HCT116 (cell line): ENCODE measurements at regions of chr11 and their contacts with region 1.

Region 1: GRCh38 chr11:18203723-18204122 is 31.1 kb downstream of the MRGPRX4 start:
- DNase-seq: peak; percentile 8
- ATAC-seq: peak; percentile 99
- H3K4me3 ChIP-seq: no peak overlapping the region
- H3K27ac ChIP-seq: no peak overlapping the region
- H3K4me1 ChIP-seq: no peaks in the 10 kb centered on the region
- H3K27me3 ChIP-seq: no peaks in the 10 kb centered on the region
- CTCF ChIP-seq: peak; percentile 61 to 71 (median 67); a peak in 5 of 6 replicates
- POLR2A ChIP-seq: no peak
- RAD21 ChIP-seq: peak; percentile 68

Region 2: DNA sequence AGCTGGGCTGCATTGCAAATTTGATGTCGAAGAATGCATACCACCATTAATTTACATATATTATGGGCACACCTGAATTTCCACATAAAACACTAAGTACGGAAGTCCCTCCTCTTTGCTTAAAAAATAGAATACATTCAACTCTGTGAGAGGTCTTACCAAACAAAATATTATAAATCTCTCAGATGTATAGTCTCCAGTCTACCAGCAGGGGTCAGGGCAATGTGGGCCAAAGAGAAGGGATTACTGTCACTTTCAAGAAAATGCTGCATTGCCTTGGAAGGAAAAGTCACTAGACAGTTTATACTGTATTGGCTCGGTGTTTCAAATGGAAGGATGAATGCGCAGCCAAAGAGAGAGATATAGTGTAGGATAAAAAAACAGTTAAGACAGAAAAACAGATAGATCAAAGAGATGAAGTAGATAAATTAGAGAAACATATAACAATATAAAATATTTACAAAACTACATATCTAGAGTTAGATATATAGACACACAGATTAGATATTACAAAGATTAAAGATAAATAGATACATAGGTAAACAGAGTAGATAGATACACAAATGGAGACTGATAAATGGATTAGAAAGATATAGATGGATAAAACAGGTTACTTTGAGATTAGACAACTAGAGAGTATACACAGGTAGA is 211.8 kb before region 1 on chr11:
- CTCF ChIA-PET with region 1: interaction called, 3 read pairs
- POLR2A ChIA-PET with region 1: no interaction called
- RAD21 ChIA-PET with region 1: no interaction called
- intact Hi-C with region 1: loop called (anchors 5 kb)
- DNase-seq: peak; percentile 42
- ATAC-seq: peak; percentile 85
- H3K4me3 ChIP-seq: no peak overlapping the region
- H3K27ac ChIP-seq: no peak overlapping the region
- H3K4me1 ChIP-seq: peaks cover 0 to 5% of the 10 kb centered on the region in 2 experiments; a peak in 2 of 4 replicates
- H3K27me3 ChIP-seq: no peaks in the 10 kb centered on the region
- CTCF ChIP-seq: peak; percentile 54 to 89 (median 83); a peak in 5 of 6 replicates
- POLR2A ChIP-seq: no peak
- RAD21 ChIP-seq: peak; percentile 69

Region 3: GRCh38 chr11:18046116-18046777 is 157.5 kb before region 1 on chr11 and contains the start of gene TPH1:
- CTCF ChIA-PET with region 1: no interaction called
- POLR2A ChIA-PET with region 1: no interaction called
- RAD21 ChIA-PET with region 1: no interaction called
- intact Hi-C with region 1: no loop called
- DNase-seq: no peak
- ATAC-seq: no peak
- H3K4me3 ChIP-seq: no peak within 1 kb of the TSS
- H3K27ac ChIP-seq: no peak within 1 kb of the TSS
- H3K4me1 ChIP-seq: no peaks in the 10 kb centered on the region
- H3K27me3 ChIP-seq: no peaks in the 10 kb centered on the region
- CTCF ChIP-seq: no peak
- POLR2A ChIP-seq: no peak
- RAD21 ChIP-seq: no peak
- total RNA-seq, gene TPH1: 0.42 TPM

Region 4: DNA sequence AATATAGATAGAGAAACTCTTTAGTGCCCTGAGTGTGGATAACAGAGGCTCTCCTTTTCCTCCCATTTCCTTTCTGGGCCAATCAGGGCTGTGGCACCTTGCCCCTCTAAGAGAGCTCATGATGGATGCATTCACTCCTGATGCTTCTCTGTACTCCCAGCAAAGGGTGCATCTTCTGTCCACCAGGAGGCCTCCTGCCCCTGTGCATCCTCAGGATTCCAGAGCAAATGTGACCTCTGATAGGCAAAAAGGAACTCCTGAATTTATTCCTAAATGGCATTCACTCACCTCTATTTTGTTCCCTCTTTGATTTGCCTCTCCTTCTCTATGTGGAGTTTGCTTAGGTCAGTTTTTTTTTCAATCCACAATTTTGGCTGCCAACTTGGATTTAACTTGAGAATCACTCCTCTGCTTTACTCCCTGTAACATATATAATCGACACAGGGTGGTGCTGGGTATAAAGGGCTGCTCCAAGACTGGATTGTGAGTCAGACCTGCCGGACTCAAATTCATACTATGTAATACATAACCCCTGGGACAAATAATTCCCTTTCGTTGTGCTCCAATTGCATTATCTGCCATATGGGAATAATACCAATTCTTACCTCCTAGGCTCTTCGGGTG is 32.2 kb before region 1 on chr11:
- CTCF ChIA-PET with region 1: interaction called, 17 read pairs
- POLR2A ChIA-PET with region 1: no interaction called
- RAD21 ChIA-PET with region 1: interaction called, 3 to 5 read pairs
- intact Hi-C with region 1: loop called (anchors 2 kb)
- DNase-seq: peak; percentile 23
- ATAC-seq: peak; percentile 99
- H3K4me3 ChIP-seq: no peak overlapping the region
- H3K27ac ChIP-seq: no peak overlapping the region
- H3K4me1 ChIP-seq: no peaks in the 10 kb centered on the region
- H3K27me3 ChIP-seq: peaks cover 18% of the 10 kb centered on the region
- CTCF ChIP-seq: peak; percentile 77 to 88 (median 85); a peak in 5 of 6 replicates
- POLR2A ChIP-seq: no peak
- RAD21 ChIP-seq: peak; percentile 79

Region 5: GRCh38 chr11:18624161-18624560 is 420.4 kb after region 1 on chr11:
- CTCF ChIA-PET with region 1: no interaction called
- POLR2A ChIA-PET with region 1: no interaction called
- RAD21 ChIA-PET with region 1: no interaction called
- intact Hi-C with region 1: no loop called
- DNase-seq: no peak
- ATAC-seq: no peak
- H3K4me3 ChIP-seq: no peak overlapping the region
- H3K27ac ChIP-seq: no peak overlapping the region
- H3K4me1 ChIP-seq: no peaks in the 10 kb centered on the region
- H3K27me3 ChIP-seq: no peaks in the 10 kb centered on the region
- CTCF ChIP-seq: no peak
- POLR2A ChIP-seq: no peak
- RAD21 ChIP-seq: no peak